Right cardiac atrium (tissue), 5 donors: ENCODE measurements at regions of chr20 and their contacts with region 1.

Region 1: DNA sequence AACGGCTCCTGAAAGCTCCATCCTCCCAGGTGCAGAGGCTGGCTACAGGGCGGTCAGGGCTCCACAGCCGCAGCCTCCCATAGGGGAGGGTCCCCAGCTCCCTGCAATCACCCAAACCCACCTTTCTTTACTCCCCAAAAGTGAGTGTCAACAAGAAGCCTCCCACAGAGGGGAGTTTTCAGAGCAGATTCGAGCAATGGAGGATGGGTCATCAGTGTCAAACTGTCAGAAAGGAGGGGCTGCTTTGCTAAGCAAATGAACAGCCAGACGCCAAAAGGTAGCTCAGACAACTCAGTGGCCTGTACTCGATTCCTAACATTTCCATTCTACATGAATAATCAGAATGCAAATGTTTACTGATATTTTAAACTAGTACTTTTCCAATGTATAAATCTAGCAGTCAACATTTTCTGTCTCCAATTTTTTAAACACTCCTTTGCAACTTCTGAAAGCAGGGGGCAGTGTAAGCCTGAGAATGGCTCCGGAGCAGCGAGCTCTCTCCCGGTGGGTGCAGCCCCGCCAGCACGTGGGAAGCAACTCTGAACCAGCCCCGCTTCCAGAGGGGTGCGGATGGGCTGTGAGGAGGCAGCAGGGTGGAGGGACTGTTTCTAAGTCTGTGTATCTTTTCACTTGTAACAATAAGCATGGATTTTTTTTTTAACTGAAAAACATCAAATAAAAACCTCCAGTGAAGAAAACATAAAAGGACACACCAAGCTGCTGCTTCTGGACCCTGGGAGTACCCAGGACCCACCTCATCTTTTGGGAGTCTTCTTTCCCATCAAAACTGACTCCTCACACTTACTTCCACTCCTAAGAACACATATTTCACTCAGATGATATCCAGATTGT is 54.9 kb downstream of the TAF4 start:
- DNase-seq: peak; percentile 51 to 78 (median 72)
- ATAC-seq: peak; percentile 55 to 68
- H3K4me3 ChIP-seq: no peak overlapping the region
- H3K27ac ChIP-seq: no peak overlapping the region
- H3K4me1 ChIP-seq: no peaks in the 10 kb centered on the region
- H3K27me3 ChIP-seq: no peaks in the 10 kb centered on the region

Region 2: GRCh38 chr20:61958773-61959700 is 51.7 kb before region 1 on chr20:
- intact Hi-C with region 1: no loop called
- DNase-seq: peak in 1 of 3 donors; percentile 30
- ATAC-seq: no peak
- H3K4me3 ChIP-seq: no peak overlapping the region
- H3K27ac ChIP-seq: no peak overlapping the region
- H3K4me1 ChIP-seq: no peaks in the 10 kb centered on the region
- H3K27me3 ChIP-seq: no peaks in the 10 kb centered on the region

Region 3: DNA sequence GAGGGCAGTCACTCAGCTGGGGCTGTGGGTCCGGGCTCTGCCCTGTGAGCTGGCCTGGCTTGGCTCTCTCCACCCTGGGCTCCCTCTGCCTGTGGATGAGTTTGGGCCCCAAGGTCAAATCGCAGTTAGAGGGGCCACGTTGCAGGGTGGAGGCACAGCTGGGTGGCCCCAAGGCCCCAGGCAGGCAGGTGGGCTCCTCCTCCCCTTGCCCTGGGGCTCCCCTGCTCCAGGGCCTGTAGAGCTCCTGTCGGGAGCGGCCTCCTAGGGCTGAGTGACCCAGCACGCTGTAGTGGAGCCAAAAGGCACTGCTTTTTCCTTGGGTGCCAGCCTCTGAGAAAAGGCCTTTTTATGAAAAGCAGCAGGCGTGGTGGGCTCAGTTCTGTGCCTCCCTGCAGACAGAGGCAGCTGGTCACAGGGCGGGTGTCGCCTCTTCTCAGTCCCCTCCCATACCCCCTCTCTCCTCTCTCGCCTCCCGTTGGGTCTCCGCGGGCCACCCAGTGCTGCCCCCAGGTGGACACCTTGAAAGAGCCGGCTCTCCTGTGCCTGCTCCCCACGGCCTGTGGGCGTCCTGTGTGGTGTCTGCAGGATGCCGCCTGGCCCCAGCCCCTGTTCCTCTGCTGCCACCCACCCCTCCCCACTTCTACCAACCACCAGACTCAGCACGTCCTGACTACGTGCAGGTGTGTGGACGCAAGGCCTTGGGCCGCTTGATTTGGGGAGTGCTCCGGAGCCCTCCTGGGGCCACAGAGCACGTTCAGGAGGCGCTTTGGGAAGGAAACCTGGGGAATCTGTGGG is 146.0 kb after region 1 on chr20:
- intact Hi-C with region 1: loop called in 1 of 4 experiments (anchors 5 kb)
- DNase-seq: peak; percentile 69 to 86 (median 86)
- ATAC-seq: peak; percentile 78 to 82
- H3K4me3 ChIP-seq: no peak overlapping the region
- H3K27ac ChIP-seq: no peak overlapping the region
- H3K4me1 ChIP-seq: no peaks in the 10 kb centered on the region
- H3K27me3 ChIP-seq: no peaks in the 10 kb centered on the region